Right ventricle myocardium inferior (tissue), 1 donor: ENCODE measurements at regions of chr10 and their contacts with region 1.

Region 1: GRCh38 chr10:70672165-70673042 is at the start of gene ADAMTS14:
- DNase-seq: peak; percentile 67
- ATAC-seq: peak; percentile 45
- total RNA-seq, gene ADAMTS14: 0.43 TPM

Region 2: GRCh38 chr10:70558871-70559810 is 113.3 kb before region 1 on chr10:
- intact Hi-C with region 1: loop called (anchors 5 kb)
- DNase-seq: no peak
- ATAC-seq: peak; percentile 79

Region 3: GRCh38 chr10:70573599-70574506 is 98.6 kb before region 1 on chr10:
- intact Hi-C with region 1: loop called (anchors 5 kb)
- DNase-seq: no peak
- ATAC-seq: no peak

Region 4: DNA sequence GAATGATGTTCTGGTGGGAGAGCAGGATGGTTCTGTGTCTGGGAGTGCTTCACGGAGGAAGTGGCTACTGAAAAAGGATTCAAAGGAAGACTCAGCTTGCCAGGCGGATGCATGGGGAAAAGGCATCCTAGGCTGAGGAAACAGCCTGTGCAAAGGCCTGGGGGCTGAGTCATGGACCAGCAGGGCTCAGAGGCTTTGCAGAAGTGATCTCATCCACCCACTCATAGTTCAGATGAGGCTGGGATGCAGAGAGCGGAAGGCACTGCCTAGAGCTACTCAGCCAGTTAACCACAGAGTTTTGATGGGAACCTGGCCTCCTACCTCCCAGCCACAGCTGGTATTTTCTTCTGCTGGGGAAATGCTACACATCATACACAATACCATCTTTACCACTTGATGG is 15.9 kb before region 1 on chr10:
- intact Hi-C with region 1: no loop called
- DNase-seq: no peak
- ATAC-seq: peak; percentile 47

Region 5: DNA sequence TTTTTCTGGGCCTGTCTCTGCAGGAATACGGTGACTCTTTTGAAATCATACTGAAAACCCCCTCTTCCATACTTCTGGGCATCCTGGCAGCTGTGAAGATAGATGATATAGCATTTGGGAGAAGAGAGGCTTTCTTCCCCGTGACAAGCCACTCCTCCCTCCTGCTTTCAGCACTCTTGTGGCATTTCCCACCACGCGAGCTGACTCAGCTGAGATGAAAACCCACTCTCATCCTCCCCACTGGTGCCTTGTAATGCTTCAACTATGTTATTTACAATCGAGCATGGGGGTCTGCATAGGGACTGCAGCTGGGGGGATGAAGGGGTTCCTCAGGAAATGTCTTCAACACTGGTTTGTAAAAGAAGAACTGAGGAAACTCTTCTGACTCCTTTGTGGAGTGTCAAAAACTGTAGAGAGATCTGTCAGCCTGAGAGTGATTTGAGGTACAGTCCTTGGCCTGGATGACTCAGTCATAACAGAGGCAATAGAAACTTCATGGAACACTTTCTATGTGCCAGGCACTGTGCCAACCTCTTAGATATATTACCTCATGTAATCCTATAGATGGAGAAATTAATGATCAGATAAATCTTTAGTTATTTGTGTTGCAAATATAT is 114.5 kb after region 1 on chr10:
- intact Hi-C with region 1: no loop called
- DNase-seq: no peak
- ATAC-seq: no peak

Region 6: GRCh38 chr10:70799124-70799523 is 126.7 kb after region 1 on chr10:
- intact Hi-C with region 1: no loop called
- DNase-seq: peak; percentile 46
- ATAC-seq: no peak